ENCODE measurements at regions of chr10 and their contacts with region 1.

Region 1: GRCh38 chr10:129274748-129275474 is 192.1 kb upstream of the MGMT start:
- DNase-seq: no peak
- H3K4me3 ChIP-seq: no peak overlapping the region
- H3K27ac ChIP-seq: no peak overlapping the region
- H3K4me1 ChIP-seq: no peaks in the 10 kb centered on the region
- H3K27me3 ChIP-seq: no peaks in the 10 kb centered on the region
- CTCF ChIP-seq: no peak
- EP300 ChIP-seq: no peak
- POLR2A ChIP-seq: no peak

Region 2: GRCh38 chr10:129345763-129346162 is 70.9 kb after region 1 on chr10:
- intact Hi-C with region 1: no loop called
- DNase-seq: no peak
- H3K4me3 ChIP-seq: no peak overlapping the region
- H3K27ac ChIP-seq: no peak overlapping the region
- H3K4me1 ChIP-seq: no peaks in the 10 kb centered on the region
- H3K27me3 ChIP-seq: no peaks in the 10 kb centered on the region
- CTCF ChIP-seq: no peak
- EP300 ChIP-seq: no peak
- POLR2A ChIP-seq: no peak

Region 3: DNA sequence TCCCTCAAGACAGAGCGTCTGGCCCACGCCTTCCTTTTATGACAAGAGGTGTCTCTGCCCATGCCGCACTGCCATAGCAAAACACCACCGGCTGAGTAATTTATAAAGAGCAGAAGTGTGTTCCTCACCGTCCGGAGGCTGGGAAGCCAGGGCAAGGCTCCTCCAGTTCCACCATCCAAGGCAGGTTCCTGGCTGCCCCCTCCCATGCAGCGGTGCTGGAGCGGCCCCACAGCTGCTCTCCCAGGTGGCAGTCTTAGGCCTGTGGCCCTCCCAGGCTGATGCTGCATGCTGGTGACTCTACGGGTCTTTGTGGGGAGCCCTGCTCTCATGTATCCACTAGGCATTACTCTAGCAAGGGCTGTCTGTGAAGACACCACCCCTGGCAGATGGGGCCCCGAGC is 1923.5 kb after region 1 on chr10:
- intact Hi-C with region 1: loop called in 1 of 4 experiments (anchors 5 kb)
- DNase-seq: peak in 1 of 5 donors; percentile 1
- H3K4me3 ChIP-seq: no peak overlapping the region
- H3K27ac ChIP-seq: no peak overlapping the region
- H3K4me1 ChIP-seq: no peaks in the 10 kb centered on the region
- H3K27me3 ChIP-seq: no peaks in the 10 kb centered on the region
- CTCF ChIP-seq: no peak
- EP300 ChIP-seq: no peak
- POLR2A ChIP-seq: no peak